CD4-positive, alpha-beta T cell (primary cell): ENCODE measurements at regions of chr9 and their contacts with region 1.

Region 1: DNA sequence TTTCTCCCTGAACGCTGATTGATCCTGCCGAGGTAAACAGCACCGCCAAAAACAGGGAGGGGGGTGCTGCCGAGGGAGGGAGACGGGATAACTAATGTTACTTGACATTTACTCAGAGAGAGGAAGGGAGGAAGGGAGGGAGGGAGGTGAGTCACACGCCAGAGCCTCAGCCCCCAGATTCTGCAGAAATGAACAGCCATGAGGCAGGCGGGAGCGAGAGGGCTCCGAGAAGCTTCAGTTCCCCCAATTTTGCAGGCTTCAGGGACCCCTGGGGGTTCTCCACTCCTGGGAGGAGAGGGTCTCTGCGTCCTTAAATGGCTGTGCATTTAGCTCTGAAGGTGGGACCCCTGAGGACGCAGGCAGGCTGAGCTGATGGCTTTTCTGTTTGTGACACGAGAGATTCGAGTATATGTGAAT is 59.1 kb upstream of the IER5L start:
- DNase-seq: peak in 13 of 14 experiments; percentile 22 to 81 (median 53)
- ATAC-seq: peak; percentile 62
- H3K4me3 ChIP-seq: peak overlapping the region; percentile 53
- H3K4me3 Mint-ChIP-seq: peak overlapping the region; percentile 94
- H3K27ac ChIP-seq: peak overlapping the region; percentile 56 to 79
- H3K27ac Mint-ChIP-seq: peak overlapping the region; percentile 99
- H3K4me1 ChIP-seq: peaks cover 52% of the 10 kb centered on the region
- H3K4me1 Mint-ChIP-seq: peaks cover 75% of the 10 kb centered on the region
- H3K27me3 ChIP-seq: no peaks in the 10 kb centered on the region
- H3K27me3 Mint-ChIP-seq: no peaks in the 10 kb centered on the region
- CTCF ChIP-seq: no peak

Region 2: DNA sequence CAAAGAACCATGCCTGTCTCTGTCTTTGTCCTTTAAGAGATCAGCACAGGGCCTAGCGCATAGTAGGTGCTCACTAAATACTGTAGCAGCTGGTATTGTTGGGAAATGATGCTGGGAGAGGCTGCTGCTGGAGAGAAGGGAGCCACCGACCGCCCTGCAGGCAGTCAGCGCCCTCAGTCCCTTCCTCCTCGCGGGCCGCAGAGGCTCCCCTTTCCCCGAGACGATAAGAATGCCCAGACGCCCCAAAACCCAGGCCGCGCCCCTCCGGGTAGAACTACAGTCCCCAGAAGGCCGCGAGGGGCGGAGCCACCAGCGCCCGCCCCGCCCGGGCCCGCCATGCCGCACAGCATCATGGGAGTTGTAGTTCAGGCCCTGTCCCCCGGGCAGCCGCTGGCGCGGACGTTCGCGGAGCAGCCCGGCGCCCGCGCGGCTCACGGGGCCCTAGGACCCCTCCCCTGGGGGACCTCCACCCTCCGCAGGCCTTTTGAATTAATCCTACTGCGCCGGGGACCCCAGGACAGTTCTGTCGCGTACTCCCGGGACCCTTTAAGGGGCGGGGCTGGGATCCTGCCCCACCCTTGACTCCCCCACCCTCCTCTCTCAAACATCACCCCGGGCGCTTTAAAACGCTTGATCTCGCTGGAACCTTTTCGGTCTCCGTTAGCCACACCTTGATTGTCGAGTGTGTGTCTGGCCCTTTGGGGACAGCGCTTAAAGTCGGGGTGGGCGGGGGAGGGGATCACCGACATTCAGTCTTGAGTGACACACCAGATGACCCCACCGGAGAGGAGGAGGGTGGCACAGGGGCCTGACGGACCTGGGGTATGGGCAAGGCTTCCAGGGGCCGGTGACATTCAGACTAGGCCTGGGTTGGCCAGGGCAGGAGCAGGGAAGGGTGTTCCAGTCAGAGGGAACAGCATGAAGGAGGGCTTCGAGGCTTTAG is 34.3 kb before region 1 on chr9:
- CTCF ChIA-PET with region 1: no interaction called
- POLR2A ChIA-PET with region 1: interaction called, 8 read pairs
- intact Hi-C with region 1: loop called (anchors 1 to 2 kb)
- DNase-seq: peak; percentile 84 to 95 (median 90)
- ATAC-seq: peak; percentile 93
- H3K4me3 ChIP-seq: peak overlapping the region; percentile 54
- H3K4me3 Mint-ChIP-seq: peak overlapping the region; percentile 83
- H3K27ac ChIP-seq: peak overlapping the region in 1 of 2 donors; percentile 41
- H3K27ac Mint-ChIP-seq: peak overlapping the region; percentile 67
- H3K4me1 ChIP-seq: peaks cover 33% of the 10 kb centered on the region
- H3K4me1 Mint-ChIP-seq: peaks cover 18% of the 10 kb centered on the region
- H3K27me3 ChIP-seq: no peaks in the 10 kb centered on the region
- H3K27me3 Mint-ChIP-seq: no peaks in the 10 kb centered on the region
- CTCF ChIP-seq: no peak

Region 3: GRCh38 chr9:129208207-129209032 is 28.8 kb before region 1 on chr9:
- CTCF ChIA-PET with region 1: no interaction called
- POLR2A ChIA-PET with region 1: interaction called, 8 read pairs
- intact Hi-C with region 1: loop called (anchors 1 to 2 kb)
- DNase-seq: peak in 10 of 14 experiments; percentile 19 to 71 (median 36)
- ATAC-seq: peak; percentile 51
- H3K4me3 ChIP-seq: no peak overlapping the region
- H3K4me3 Mint-ChIP-seq: peak overlapping the region; percentile 74
- H3K27ac ChIP-seq: peak overlapping the region in 1 of 2 donors; percentile 31
- H3K27ac Mint-ChIP-seq: peak overlapping the region; percentile 75
- H3K4me1 ChIP-seq: peaks cover 36% of the 10 kb centered on the region
- H3K4me1 Mint-ChIP-seq: peaks cover 32% of the 10 kb centered on the region
- H3K27me3 ChIP-seq: no peaks in the 10 kb centered on the region
- H3K27me3 Mint-ChIP-seq: no peaks in the 10 kb centered on the region
- CTCF ChIP-seq: no peak

Region 4: GRCh38 chr9:129225815-129226214 is 11.4 kb before region 1 on chr9:
- CTCF ChIA-PET with region 1: interaction called, 6 read pairs
- POLR2A ChIA-PET with region 1: interaction called, 15 read pairs
- intact Hi-C with region 1: no loop called
- DNase-seq: peak in 12 of 14 experiments; percentile 28 to 83 (median 46)
- ATAC-seq: peak; percentile 82
- H3K4me3 ChIP-seq: no peak overlapping the region
- H3K4me3 Mint-ChIP-seq: peak overlapping the region; percentile 62
- H3K27ac ChIP-seq: no peak overlapping the region
- H3K27ac Mint-ChIP-seq: peak overlapping the region; percentile 56
- H3K4me1 ChIP-seq: peaks cover 29% of the 10 kb centered on the region
- H3K4me1 Mint-ChIP-seq: peaks cover 34% of the 10 kb centered on the region
- H3K27me3 ChIP-seq: no peaks in the 10 kb centered on the region
- H3K27me3 Mint-ChIP-seq: no peaks in the 10 kb centered on the region
- CTCF ChIP-seq: no peak

Region 5: DNA sequence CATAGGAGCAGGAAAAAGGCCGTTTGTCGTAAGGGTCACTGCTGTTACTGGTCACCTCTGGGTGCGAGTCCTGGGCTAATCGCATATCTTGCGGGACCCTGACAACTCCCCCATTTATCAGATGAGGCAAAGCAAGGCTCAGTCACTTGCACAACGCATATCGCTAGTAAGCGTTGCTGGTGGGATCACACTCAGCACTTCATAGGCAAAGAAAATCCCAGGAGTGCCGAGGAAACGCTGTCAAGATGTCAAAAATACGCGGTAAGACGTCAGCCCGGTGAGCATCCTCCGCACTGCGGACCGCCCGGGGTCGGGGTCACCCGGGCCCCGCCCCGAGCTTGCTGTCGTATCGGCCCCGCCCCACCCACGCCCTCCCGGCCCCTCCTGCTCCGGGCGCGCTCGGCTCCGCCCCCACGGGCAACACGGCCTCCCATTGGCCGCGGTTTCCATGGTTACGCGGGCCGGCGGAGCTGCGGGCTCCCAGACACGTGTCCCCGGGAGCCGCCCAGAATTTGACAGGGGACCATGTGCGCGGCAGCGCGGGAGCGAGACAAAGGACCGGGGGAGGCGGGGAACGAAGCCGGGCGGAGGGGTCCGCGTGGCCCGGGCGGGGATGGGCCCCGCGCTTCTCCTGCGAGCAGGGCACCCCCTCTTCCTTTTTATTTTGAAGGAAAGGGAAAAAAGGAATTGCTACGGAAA is 21.1 kb after region 1 on chr9:
- CTCF ChIA-PET with region 1: no interaction called
- POLR2A ChIA-PET with region 1: interaction called, 8 read pairs
- intact Hi-C with region 1: loop called (anchors 2 kb)
- DNase-seq: peak; percentile 77 to 97 (median 87)
- ATAC-seq: peak; percentile 89
- H3K4me3 ChIP-seq: peak overlapping the region; percentile 51
- H3K4me3 Mint-ChIP-seq: peak overlapping the region; percentile 80
- H3K27ac ChIP-seq: no peak overlapping the region
- H3K27ac Mint-ChIP-seq: no peak overlapping the region
- H3K4me1 ChIP-seq: peaks cover 34% of the 10 kb centered on the region
- H3K4me1 Mint-ChIP-seq: peaks cover 47% of the 10 kb centered on the region
- H3K27me3 ChIP-seq: peaks cover 0 to 3% of the 10 kb centered on the region in 2 experiments
- H3K27me3 Mint-ChIP-seq: no peaks in the 10 kb centered on the region
- CTCF ChIP-seq: no peak

Region 6: GRCh38 chr9:129287619-129288305 is 50.6 kb after region 1 on chr9:
- CTCF ChIA-PET with region 1: no interaction called
- POLR2A ChIA-PET with region 1: no interaction called
- intact Hi-C with region 1: no loop called
- DNase-seq: peak in 1 of 14 experiments; percentile 5
- ATAC-seq: no peak
- H3K4me3 ChIP-seq: no peak overlapping the region
- H3K4me3 Mint-ChIP-seq: no peak overlapping the region
- H3K27ac ChIP-seq: no peak overlapping the region
- H3K27ac Mint-ChIP-seq: no peak overlapping the region
- H3K4me1 ChIP-seq: no peaks in the 10 kb centered on the region
- H3K4me1 Mint-ChIP-seq: no peaks in the 10 kb centered on the region
- H3K27me3 ChIP-seq: no peaks in the 10 kb centered on the region
- H3K27me3 Mint-ChIP-seq: no peaks in the 10 kb centered on the region
- CTCF ChIP-seq: no peak

Region 7: DNA sequence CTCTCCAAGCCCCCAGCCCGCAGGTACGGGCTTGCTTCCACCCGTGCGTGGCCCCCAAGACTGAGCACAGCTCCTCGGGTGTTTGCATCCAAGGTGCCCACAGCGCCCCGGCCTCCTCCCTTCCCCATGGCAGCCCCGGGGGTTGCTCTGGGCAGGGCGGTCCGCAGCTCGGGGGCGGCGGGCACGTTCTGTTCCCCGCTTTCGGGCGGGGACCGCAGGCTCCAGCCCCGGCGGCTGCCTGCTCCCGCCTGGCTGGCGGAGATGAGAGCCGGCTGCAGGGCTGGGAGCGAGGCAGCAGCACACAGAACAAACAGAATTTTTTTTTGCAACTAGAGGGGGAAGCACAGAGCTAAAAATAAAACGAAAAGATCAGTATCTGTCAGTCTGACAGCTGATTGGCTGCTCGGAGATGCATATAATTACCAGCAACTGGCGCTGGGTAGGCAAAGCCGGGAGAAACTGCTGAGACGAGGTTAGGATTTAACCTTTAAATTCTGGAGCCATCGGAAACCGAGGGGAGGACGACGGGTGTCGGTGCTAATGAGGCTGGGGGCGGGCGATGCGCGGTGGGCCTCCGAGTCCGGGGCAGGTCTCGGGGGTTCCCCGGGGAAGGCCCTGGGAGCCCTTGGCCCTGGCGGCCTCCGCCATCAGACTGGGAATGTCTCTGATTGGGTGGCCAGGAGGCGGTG is 83.5 kb after region 1 on chr9:
- CTCF ChIA-PET with region 1: interaction called, 3 read pairs
- POLR2A ChIA-PET with region 1: interaction called, 13 read pairs
- intact Hi-C with region 1: no loop called
- DNase-seq: peak; percentile 16 to 85 (median 42)
- ATAC-seq: peak; percentile 97
- H3K4me3 ChIP-seq: peak overlapping the region; percentile 46
- H3K4me3 Mint-ChIP-seq: peak overlapping the region; percentile 74
- H3K27ac ChIP-seq: peak overlapping the region in 1 of 2 donors; percentile 50
- H3K27ac Mint-ChIP-seq: peak overlapping the region; percentile 67
- H3K4me1 ChIP-seq: peaks cover 24% of the 10 kb centered on the region
- H3K4me1 Mint-ChIP-seq: peaks cover 17% of the 10 kb centered on the region
- H3K27me3 ChIP-seq: no peaks in the 10 kb centered on the region
- H3K27me3 Mint-ChIP-seq: no peaks in the 10 kb centered on the region
- CTCF ChIP-seq: peak; percentile 25

Region 8: DNA sequence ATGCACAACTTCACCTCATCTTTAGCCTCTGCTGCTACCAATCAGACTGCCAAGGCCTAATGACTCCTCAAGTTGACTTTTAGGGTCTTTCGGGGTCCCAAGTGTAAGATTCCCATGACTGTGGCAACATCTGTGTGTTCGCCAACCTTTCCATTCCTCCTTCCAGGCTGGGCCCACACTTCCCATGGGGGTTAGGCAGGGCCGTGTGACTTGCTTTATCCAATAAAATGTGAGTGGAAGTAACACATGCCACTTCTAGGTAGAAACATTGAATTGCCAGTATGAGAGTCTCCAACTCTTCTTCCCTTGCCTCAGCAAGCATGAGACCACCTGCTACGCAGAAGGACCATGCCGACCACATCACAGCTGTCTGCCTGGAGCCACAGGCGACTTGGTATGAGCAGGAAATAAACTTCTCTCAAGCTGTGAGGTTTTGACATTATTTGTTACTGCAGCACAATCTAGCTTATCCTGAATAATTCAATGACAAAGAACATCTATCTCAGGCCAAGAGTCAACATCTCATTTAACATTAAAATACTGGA is 131.3 kb after region 1 on chr9:
- CTCF ChIA-PET with region 1: no interaction called
- POLR2A ChIA-PET with region 1: no interaction called
- intact Hi-C with region 1: no loop called
- DNase-seq: no peak
- ATAC-seq: no peak
- H3K4me3 ChIP-seq: no peak overlapping the region
- H3K4me3 Mint-ChIP-seq: no peak overlapping the region
- H3K27ac ChIP-seq: no peak overlapping the region
- H3K27ac Mint-ChIP-seq: no peak overlapping the region
- H3K4me1 ChIP-seq: no peaks in the 10 kb centered on the region
- H3K4me1 Mint-ChIP-seq: no peaks in the 10 kb centered on the region
- H3K27me3 ChIP-seq: no peaks in the 10 kb centered on the region
- H3K27me3 Mint-ChIP-seq: no peaks in the 10 kb centered on the region
- CTCF ChIP-seq: no peak

Region 9: GRCh38 chr9:129626079-129626624 is 388.9 kb after region 1 on chr9 and contains the start of gene NTMT1:
- CTCF ChIA-PET with region 1: no interaction called
- POLR2A ChIA-PET with region 1: interaction called, 20 read pairs
- intact Hi-C with region 1: no loop called
- DNase-seq: peak; percentile 85 to 97 (median 90)
- ATAC-seq: peak; percentile 65
- H3K4me3 ChIP-seq: peak within 1 kb of the TSS; percentile 75
- H3K4me3 Mint-ChIP-seq: peak within 1 kb of the TSS; percentile 94
- H3K27ac ChIP-seq: peak within 1 kb of the TSS; percentile 77 to 98
- H3K27ac Mint-ChIP-seq: peak within 1 kb of the TSS; percentile 94
- H3K4me1 ChIP-seq: peaks cover 70% of the 10 kb centered on the region
- H3K4me1 Mint-ChIP-seq: peaks cover 63% of the 10 kb centered on the region
- H3K27me3 ChIP-seq: peaks cover 6 to 10% of the 10 kb centered on the region in 2 experiments
- H3K27me3 Mint-ChIP-seq: peaks cover 13% of the 10 kb centered on the region
- CTCF ChIP-seq: no peak
- total RNA-seq, gene NTMT1: 50.7 to 52.5 TPM

Region 10: DNA sequence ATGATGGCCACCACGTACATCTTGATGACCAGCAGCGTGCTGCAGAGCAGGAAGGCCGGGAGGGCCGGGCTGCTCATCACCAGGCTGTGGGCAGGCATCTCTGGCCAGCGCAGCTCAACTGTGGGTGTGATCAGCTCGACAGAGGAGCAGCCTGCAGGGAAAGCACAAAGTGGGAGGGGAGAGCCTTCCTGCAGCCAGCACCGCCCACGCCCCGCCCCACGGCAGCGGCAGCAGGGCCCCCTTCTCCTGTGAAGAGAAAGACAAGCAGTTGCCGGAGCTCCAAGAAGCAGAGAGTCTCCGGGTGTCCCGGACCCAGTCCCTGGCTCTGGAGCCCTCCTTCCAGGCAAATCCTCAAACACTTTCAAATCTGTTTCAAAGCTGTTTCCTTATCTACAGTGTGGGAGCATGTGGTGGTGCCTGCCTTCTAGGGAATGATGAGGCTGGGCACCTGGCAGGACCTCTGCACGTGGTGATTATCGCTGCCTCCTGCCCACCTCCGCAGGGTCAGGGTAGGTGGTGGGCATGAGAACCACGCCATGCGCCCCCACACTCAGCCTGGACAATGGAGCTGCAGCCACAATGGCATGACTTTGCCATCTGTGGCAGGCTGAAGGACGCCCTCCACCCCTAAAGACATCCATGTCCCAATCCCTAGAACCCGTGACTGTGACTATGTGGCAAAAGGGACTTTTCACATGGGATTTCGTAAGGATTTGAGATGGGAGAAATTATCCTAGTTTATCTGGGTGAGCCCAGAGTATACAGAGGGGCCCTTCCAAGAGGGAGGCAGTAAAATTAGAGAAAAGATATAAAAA is 515.9 kb after region 1 on chr9 and contains the start of gene PTGES:
- CTCF ChIA-PET with region 1: no interaction called
- POLR2A ChIA-PET with region 1: no interaction called
- intact Hi-C with region 1: no loop called
- DNase-seq: peak; percentile 18 to 78 (median 46)
- ATAC-seq: peak; percentile 89
- H3K4me3 ChIP-seq: no peak within 1 kb of the TSS
- H3K4me3 Mint-ChIP-seq: no peak within 1 kb of the TSS
- H3K27ac ChIP-seq: no peak within 1 kb of the TSS
- H3K27ac Mint-ChIP-seq: no peak within 1 kb of the TSS
- H3K4me1 ChIP-seq: peaks cover 23% of the 10 kb centered on the region
- H3K4me1 Mint-ChIP-seq: peaks cover 25% of the 10 kb centered on the region
- H3K27me3 ChIP-seq: peaks cover 0 to 3% of the 10 kb centered on the region in 2 experiments
- H3K27me3 Mint-ChIP-seq: peaks cover 12% of the 10 kb centered on the region
- CTCF ChIP-seq: no peak
- total RNA-seq, gene PTGES: 0.25 to 0.38 TPM